CD4-positive, alpha-beta T cell (primary cell): ENCODE measurements at regions of chr3 and their contacts with region 1.

Region 1: GRCh38 chr3:133573054-133573628 is 345 bp upstream of the CDV3 start:
- DNase-seq: peak; percentile 99 to 100 (median 100)
- ATAC-seq: peak; percentile 84
- H3K4me3 ChIP-seq: peak overlapping the region; percentile 79
- H3K4me3 Mint-ChIP-seq: peak overlapping the region; percentile 89
- H3K27ac ChIP-seq: peak overlapping the region; percentile 88 to 98
- H3K27ac Mint-ChIP-seq: peak overlapping the region; percentile 99
- H3K4me1 ChIP-seq: peaks cover 39% of the 10 kb centered on the region
- H3K4me1 Mint-ChIP-seq: peaks cover 64% of the 10 kb centered on the region
- H3K27me3 ChIP-seq: no peaks in the 10 kb centered on the region
- H3K27me3 Mint-ChIP-seq: no peaks in the 10 kb centered on the region
- CTCF ChIP-seq: no peak

Region 2: DNA sequence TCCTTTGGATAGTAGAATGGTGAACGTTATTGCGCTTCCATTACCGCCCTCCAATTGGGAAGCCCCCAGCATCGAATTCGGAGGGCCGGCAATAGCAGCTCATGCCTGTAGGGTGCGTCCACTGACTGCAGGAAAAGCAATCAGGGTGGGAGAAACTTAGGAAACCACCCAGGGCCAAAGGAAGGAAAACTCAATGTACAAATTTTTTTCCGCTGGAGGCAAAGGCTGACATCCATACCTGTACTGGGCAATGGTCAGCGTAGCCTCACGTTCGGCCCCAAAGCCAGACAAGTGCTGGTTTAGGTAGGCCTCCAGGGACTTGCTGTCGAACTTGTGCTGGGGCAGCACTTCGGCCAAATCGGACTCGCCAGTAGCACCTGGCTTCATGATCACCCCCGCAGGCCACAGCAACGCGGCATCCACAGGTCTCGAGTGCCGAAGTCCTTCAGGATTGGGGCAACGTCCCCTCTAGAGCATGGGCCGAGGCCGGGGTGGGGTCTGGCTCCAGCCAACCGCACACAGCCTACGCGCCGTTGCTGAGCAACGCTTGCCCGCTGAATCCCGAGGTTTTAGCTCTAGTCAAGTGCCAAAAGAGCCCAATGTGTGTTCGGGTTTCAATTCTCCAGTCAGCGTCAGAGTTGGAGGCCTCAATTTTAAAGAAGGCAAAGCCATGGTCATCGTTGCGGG is 913.6 kb before region 1 on chr3 and contains the start of gene ACAD11:
- CTCF ChIA-PET with region 1: no interaction called
- POLR2A ChIA-PET with region 1: interaction called, 3 read pairs
- intact Hi-C with region 1: loop called in 1 of 2 experiments (anchors 10 kb)
- DNase-seq: peak in 13 of 14 experiments; percentile 2 to 59 (median 13)
- ATAC-seq: peak; percentile 16
- H3K4me3 ChIP-seq: peak within 1 kb of the TSS; percentile 93
- H3K4me3 Mint-ChIP-seq: peak within 1 kb of the TSS; percentile 100
- H3K27ac ChIP-seq: peak within 1 kb of the TSS; percentile 41 to 62
- H3K27ac Mint-ChIP-seq: peak within 1 kb of the TSS; percentile 98
- H3K4me1 ChIP-seq: peaks cover 8% of the 10 kb centered on the region
- H3K4me1 Mint-ChIP-seq: peaks cover 77% of the 10 kb centered on the region
- H3K27me3 ChIP-seq: no peaks in the 10 kb centered on the region
- H3K27me3 Mint-ChIP-seq: no peaks in the 10 kb centered on the region
- CTCF ChIP-seq: peak; percentile 40
- total RNA-seq, gene ACAD11: 26.6 to 27.9 TPM

Region 3: DNA sequence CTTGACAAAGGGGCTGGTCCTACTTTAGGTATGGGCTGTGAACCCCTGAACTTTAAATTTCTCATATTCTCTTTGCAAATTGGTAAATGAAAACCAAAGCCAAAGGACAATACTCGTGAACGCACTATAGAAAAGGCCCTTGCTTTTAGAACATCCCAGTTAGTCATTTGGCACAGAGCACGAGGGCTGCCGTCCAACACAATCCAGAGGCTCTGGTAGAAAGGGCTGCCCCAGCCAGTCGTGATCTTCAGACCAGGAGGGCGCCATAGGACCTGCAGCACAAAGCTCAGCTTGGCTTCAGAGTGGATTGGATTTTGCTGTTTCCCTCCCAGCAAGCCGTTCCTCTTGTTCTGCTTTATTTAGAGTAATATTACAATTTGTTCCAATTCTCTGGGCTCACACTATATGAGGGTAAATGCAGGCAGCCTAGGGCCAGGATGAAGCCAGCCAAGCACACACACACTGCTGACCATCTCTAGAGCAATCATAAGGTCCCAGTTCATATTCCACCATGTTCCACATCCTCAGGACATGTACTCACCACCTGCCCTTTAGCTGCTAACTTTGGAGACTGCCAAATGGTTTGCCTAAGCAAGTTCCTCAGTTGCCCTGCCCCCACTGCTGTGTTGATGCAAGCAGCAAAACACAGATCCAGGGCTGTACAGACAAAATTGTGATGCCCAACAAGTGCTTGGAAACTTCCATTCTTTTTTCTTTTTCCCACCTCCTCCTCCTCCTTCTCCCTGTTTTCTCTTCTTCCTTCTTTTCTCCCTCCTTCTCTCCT is 179.3 kb before region 1 on chr3:
- CTCF ChIA-PET with region 1: no interaction called
- POLR2A ChIA-PET with region 1: no interaction called
- intact Hi-C with region 1: no loop called
- DNase-seq: no peak
- ATAC-seq: no peak
- H3K4me3 ChIP-seq: no peak overlapping the region
- H3K4me3 Mint-ChIP-seq: no peak overlapping the region
- H3K27ac ChIP-seq: no peak overlapping the region
- H3K27ac Mint-ChIP-seq: no peak overlapping the region
- H3K4me1 ChIP-seq: no peaks in the 10 kb centered on the region
- H3K4me1 Mint-ChIP-seq: peaks cover 5% of the 10 kb centered on the region
- H3K27me3 ChIP-seq: no peaks in the 10 kb centered on the region
- H3K27me3 Mint-ChIP-seq: no peaks in the 10 kb centered on the region
- CTCF ChIP-seq: no peak

Region 4: DNA sequence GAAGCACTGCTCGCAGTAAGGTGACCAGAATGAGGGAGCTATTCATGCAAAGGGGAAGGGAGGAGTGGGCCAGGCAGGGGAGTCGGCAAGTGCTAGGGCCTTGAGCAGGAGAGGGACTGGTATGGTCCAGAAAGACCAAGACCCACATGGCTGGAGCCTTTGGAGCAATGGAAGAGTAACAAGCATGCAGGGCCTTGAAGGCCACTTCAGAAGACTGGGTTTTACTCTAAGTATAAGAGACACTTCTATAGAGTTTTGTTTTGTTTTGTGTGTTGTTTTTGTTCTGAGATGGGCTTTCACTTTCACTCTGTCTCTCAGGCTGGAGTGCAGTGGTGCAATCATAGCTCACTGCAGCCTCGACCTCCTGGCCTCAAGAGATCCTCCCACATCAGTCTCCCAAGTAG is 131.3 kb before region 1 on chr3:
- CTCF ChIA-PET with region 1: no interaction called
- POLR2A ChIA-PET with region 1: interaction called, 14 read pairs
- intact Hi-C with region 1: loop called in 1 of 2 experiments (anchors 5 kb)
- DNase-seq: peak in 8 of 14 experiments; percentile 3 to 51 (median 30)
- ATAC-seq: peak; percentile 70
- H3K4me3 ChIP-seq: peak overlapping the region; percentile 43
- H3K4me3 Mint-ChIP-seq: peak overlapping the region; percentile 85
- H3K27ac ChIP-seq: peak overlapping the region; percentile 56 to 58
- H3K27ac Mint-ChIP-seq: peak overlapping the region; percentile 83
- H3K4me1 ChIP-seq: peaks cover 19% of the 10 kb centered on the region
- H3K4me1 Mint-ChIP-seq: peaks cover 36% of the 10 kb centered on the region
- H3K27me3 ChIP-seq: no peaks in the 10 kb centered on the region
- H3K27me3 Mint-ChIP-seq: no peaks in the 10 kb centered on the region
- CTCF ChIP-seq: no peak

Region 5: DNA sequence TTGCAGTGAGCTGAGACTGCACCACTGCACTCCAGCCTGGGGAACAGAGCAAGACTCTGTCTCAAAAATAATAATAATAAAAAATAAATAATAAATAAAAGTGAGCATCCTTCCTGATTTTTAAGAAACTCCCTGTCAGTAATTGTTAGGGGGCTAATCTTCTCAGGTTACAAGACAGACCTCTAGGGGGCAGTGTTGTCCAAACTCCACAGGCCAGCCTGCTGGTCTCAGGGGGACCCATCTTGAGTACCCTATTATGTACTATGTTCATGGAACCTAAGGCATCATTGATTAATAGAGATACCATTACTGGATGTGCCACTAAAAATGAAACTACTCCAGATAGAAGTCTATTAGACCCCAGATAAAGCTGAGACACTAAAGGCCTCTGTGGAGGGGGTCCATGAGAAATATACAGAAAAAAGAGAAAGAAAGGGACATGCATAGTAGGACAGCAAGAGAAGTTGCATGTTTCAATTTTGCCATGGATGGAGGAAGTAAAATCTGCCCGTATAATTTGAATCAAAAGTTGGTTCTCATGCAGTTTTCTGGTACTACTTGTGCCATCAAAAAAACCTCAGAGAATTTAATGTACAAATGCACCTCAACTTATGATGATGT is 85.1 kb before region 1 on chr3:
- CTCF ChIA-PET with region 1: interaction called, 3 read pairs
- POLR2A ChIA-PET with region 1: interaction called, 104 read pairs
- intact Hi-C with region 1: loop called (anchors 1 to 2 kb)
- DNase-seq: peak; percentile 34 to 81 (median 54)
- ATAC-seq: peak; percentile 35
- H3K4me3 ChIP-seq: no peak overlapping the region
- H3K4me3 Mint-ChIP-seq: peak overlapping the region; percentile 65
- H3K27ac ChIP-seq: no peak overlapping the region
- H3K27ac Mint-ChIP-seq: peak overlapping the region; percentile 98
- H3K4me1 ChIP-seq: peaks cover 43% of the 10 kb centered on the region
- H3K4me1 Mint-ChIP-seq: peaks cover 52% of the 10 kb centered on the region
- H3K27me3 ChIP-seq: no peaks in the 10 kb centered on the region
- H3K27me3 Mint-ChIP-seq: no peaks in the 10 kb centered on the region
- CTCF ChIP-seq: peak; percentile 76

Region 6: GRCh38 chr3:133661454-133662277 is 88.5 kb after region 1 on chr3 and contains the start of gene TOPBP1:
- CTCF ChIA-PET with region 1: no interaction called
- POLR2A ChIA-PET with region 1: interaction called, 33 read pairs
- intact Hi-C with region 1: loop called (anchors 2 kb)
- DNase-seq: peak; percentile 70 to 92 (median 81)
- ATAC-seq: peak; percentile 85
- H3K4me3 ChIP-seq: peak within 1 kb of the TSS; percentile 72
- H3K4me3 Mint-ChIP-seq: peak within 1 kb of the TSS; percentile 97
- H3K27ac ChIP-seq: peak within 1 kb of the TSS; percentile 58 to 73
- H3K27ac Mint-ChIP-seq: peak within 1 kb of the TSS; percentile 95
- H3K4me1 ChIP-seq: peaks cover 26% of the 10 kb centered on the region
- H3K4me1 Mint-ChIP-seq: peaks cover 45% of the 10 kb centered on the region
- H3K27me3 ChIP-seq: no peaks in the 10 kb centered on the region
- H3K27me3 Mint-ChIP-seq: no peaks in the 10 kb centered on the region
- CTCF ChIP-seq: no peak
- total RNA-seq, gene TOPBP1: 29.1 to 32.4 TPM